IMR-90 (cell line): ENCODE measurements at regions of chr12 and their contacts with region 1.

Region 1: DNA sequence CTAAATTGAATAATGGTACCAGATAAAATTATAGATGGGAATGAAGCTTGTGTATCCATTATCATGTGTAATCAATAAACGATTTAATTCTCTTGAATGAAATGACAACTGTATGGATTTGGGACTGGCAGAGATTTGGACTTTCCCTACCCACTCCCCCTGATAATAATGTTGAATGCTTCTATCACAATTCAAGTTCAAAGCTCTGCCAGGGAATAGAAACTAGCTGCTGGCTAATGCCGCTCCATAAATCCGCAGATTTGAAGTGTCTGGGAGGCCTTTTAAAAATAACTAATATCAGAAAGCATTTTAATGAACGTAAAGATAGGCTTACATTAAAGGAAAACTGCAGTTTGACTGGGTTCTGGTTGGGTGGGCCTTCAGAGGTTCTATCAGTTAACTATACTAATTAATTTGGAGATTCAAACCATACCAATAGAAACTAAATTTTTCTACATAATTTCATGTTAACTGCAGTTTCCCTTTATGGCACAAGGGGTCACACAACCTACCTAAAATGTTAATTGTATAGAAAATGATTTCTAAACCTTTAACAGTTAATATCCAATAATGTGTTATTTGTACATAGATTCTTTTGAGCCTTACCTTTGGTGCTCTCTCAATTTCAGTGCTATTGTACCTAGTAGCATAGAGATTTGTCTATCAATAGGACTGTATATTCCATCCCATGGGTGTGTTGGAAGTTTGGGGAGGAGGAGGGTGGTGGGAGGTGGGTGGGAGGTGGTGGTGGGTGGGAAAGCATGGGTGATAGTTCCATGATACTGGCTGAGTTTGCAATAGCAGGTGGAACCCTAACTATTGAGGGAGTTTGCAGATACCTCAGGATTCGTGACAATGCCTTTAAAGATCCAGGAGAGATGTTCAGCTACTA is 4.9 kb downstream of the HNRNPA1 start:
- DNase-seq: no peak
- ATAC-seq: no peak
- H3K4me3 ChIP-seq: no peak overlapping the region
- H3K27ac ChIP-seq: no peak overlapping the region
- H3K4me1 ChIP-seq: no peaks in the 10 kb centered on the region
- H3K27me3 ChIP-seq: no peaks in the 10 kb centered on the region
- CTCF ChIP-seq: peak; percentile 41
- POLR2A ChIP-seq: no peak
- RAD21 ChIP-seq: peak; percentile 29

Region 2: DNA sequence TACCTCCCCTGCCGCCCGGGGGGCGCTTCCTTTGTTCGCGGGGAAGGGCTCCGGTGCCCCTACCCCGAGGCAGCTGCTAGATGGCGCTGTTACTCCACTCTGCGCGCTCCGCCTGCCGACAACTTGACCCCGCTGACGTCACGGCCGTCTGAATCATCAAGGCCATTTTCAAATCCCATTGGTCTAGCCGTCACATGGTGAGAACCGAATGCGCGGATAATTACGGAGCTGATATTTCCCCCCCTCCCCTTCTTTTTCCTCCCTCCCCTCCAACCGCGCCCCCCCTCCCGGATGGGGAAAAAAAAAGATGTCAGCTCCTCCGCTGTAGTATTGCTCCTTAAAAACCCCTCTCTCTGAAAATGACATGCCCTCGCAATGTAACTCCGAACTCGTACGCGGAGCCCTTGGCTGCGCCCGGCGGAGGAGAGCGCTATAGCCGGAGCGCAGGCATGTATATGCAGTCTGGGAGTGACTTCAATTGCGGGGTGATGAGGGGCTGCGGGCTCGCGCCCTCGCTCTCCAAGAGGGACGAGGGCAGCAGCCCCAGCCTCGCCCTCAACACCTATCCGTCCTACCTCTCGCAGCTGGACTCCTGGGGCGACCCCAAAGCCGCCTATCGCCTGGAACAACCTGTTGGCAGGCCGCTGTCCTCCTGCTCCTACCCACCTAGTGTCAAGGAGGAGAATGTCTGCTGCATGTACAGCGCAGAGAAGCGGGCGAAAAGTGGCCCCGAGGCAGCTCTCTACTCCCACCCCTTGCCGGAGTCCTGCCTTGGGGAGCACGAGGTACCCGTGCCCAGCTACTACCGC is 300.3 kb before region 1 on chr12 and contains the start of gene HOXC10:
- CTCF ChIA-PET with region 1: no interaction called
- POLR2A ChIA-PET with region 1: no interaction called
- dilution Hi-C with region 1: no loop called
- in situ Hi-C with region 1: no loop called
- intact Hi-C with region 1: no loop called
- DNase-seq: peak; percentile 75
- ATAC-seq: 0 out of 2 replicates have a peak, but pooled peaks have one; percentile 27
- H3K4me3 ChIP-seq: no peak within 1 kb of the TSS
- H3K27ac ChIP-seq: no peak within 1 kb of the TSS
- H3K4me1 ChIP-seq: 0 out of 2 replicates have a peak, but pooled peaks cover 2% of the 10 kb centered on the region
- H3K27me3 ChIP-seq: peaks cover 94% of the 10 kb centered on the region
- CTCF ChIP-seq: peak; percentile 61
- POLR2A ChIP-seq: no peak
- RAD21 ChIP-seq: peak; percentile 64
- total RNA-seq, gene HOXC10: not detected in 2 replicates

Region 3: GRCh38 chr12:54251667-54252284 is 33.6 kb before region 1 on chr12:
- CTCF ChIA-PET with region 1: interaction called, 5 read pairs
- POLR2A ChIA-PET with region 1: interaction called, 3 read pairs
- dilution Hi-C with region 1: no loop called
- in situ Hi-C with region 1: no loop called
- intact Hi-C with region 1: loop called (anchors 5 kb)
- DNase-seq: peak; percentile 60
- ATAC-seq: peak; percentile 69
- H3K4me3 ChIP-seq: no peak overlapping the region
- H3K27ac ChIP-seq: no peak overlapping the region
- H3K4me1 ChIP-seq: no peaks in the 10 kb centered on the region
- H3K27me3 ChIP-seq: no peaks in the 10 kb centered on the region
- CTCF ChIP-seq: peak; percentile 78
- POLR2A ChIP-seq: no peak
- RAD21 ChIP-seq: peak; percentile 73